SK-N-SH (cell line): ENCODE measurements at regions of chrX and their contacts with region 1.

Region 1: DNA sequence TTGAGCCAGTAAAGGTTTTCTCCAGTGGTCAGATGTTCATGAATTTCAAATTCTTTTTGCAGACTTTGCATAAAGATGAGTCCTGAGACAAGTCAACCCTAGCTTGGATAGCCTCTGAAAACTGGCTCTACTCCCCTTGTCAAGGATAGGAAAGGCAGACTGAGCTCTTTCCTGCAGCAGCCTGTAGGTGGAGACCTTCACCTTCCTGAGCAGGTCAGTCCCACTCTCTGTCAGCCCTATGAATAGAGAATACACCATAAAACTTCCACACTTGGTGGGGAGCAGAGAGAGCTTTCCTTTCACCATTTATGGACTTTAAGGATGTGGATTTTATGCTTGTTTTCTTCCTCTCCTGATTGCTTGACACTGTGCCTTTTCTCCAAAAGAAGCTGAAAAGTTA is 41.9 kb downstream of the PCDH19 start:
- DNase-seq: peak; percentile 21
- H3K4me3 ChIP-seq: no peak overlapping the region
- H3K27ac ChIP-seq: no peak overlapping the region
- H3K4me1 ChIP-seq: no peaks in the 10 kb centered on the region
- H3K27me3 ChIP-seq: peaks cover 5% of the 10 kb centered on the region; the same call in 1 of the 2 replicates
- CTCF ChIP-seq: peak; percentile 43; the same call in 1 of the 2 replicates
- EP300 ChIP-seq: no peak
- RAD21 ChIP-seq: peak; percentile 45

Region 2: GRCh38 chrX:100379388-100379986 is 11.3 kb after region 1 on chrX:
- CTCF ChIA-PET with region 1: interaction called, 14 read pairs
- POLR2A ChIA-PET with region 1: no interaction called
- DNase-seq: peak; percentile 12
- H3K4me3 ChIP-seq: no peak overlapping the region
- H3K27ac ChIP-seq: no peak overlapping the region
- H3K4me1 ChIP-seq: no peaks in the 10 kb centered on the region
- H3K27me3 ChIP-seq: no peaks in the 10 kb centered on the region; the same call in 1 of the 2 replicates
- CTCF ChIP-seq: peak; percentile 70
- EP300 ChIP-seq: no peak
- RAD21 ChIP-seq: peak; percentile 46

Region 3: DNA sequence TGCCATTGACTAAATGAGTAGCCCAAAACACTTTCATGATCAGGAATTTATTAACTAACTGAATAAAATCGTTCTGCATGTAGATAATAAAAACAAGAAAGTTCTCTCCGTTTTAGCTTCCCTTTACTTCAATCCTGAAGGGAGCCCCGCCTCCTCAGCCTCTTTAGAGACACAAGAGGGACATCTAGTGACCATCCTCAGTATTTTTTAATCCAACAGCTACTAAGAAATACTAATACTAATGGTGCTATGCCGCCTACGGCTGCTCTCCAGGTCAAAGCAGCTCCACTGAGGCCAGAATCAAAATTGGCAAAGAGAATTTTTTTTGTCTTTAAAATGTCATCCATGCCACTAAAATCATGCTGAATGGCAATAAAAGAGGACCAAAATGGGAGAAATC is 45.1 kb after region 1 on chrX:
- CTCF ChIA-PET with region 1: interaction called, 10 read pairs
- POLR2A ChIA-PET with region 1: no interaction called
- DNase-seq: peak; percentile 63
- H3K4me3 ChIP-seq: no peak overlapping the region
- H3K27ac ChIP-seq: no peak overlapping the region
- H3K4me1 ChIP-seq: no peaks in the 10 kb centered on the region; a peak in 1 of 4 replicates
- H3K27me3 ChIP-seq: peaks cover 56% of the 10 kb centered on the region
- CTCF ChIP-seq: peak; percentile 68
- EP300 ChIP-seq: no peak
- RAD21 ChIP-seq: peak; percentile 75